ENCODE measurements at regions of chr5 and their contacts with region 1.

Region 1: DNA sequence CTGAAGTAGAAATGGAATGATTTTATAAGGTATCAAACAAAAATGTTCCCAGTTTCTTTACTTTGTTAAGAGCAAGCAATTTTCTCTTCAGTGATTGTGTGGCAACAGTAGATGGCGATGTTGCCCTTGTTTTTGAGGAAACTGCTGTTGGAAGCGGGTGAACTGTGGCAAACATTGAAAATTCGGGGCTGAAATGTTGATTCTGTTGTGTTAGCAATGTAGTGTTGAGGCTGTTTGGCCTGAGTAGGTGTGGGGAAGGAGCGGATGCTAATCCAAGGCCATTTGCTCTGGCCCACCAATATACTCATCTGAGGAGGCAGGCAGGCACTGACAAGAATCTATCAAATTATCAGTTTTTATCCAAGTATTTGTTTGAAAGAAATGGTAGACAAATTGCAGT is 129.8 kb downstream of the SLC12A2 start:
- DNase-seq: peak; percentile 24 to 75
- ATAC-seq: peak; percentile 61 to 83
- H3K4me3 ChIP-seq: no peak overlapping the region
- H3K27ac ChIP-seq: no peak overlapping the region
- H3K4me1 ChIP-seq: no peaks in the 10 kb centered on the region
- CTCF ChIP-seq: peak; percentile 96
- EP300 ChIP-seq: no peak
- POLR2A ChIP-seq: no peak
- RAD21 ChIP-seq: peak; percentile 93 to 96

Region 2: GRCh38 chr5:126998201-126998631 is 1215.1 kb before region 1 on chr5:
- CTCF ChIA-PET with region 1: no interaction called
- POLR2A ChIA-PET with region 1: no interaction called
- DNase-seq: no peak
- ATAC-seq: no peak
- H3K4me3 ChIP-seq: no peak overlapping the region
- H3K27ac ChIP-seq: no peak overlapping the region
- H3K4me1 ChIP-seq: no peaks in the 10 kb centered on the region
- CTCF ChIP-seq: no peak
- EP300 ChIP-seq: no peak
- POLR2A ChIP-seq: no peak
- RAD21 ChIP-seq: no peak

Region 3: DNA sequence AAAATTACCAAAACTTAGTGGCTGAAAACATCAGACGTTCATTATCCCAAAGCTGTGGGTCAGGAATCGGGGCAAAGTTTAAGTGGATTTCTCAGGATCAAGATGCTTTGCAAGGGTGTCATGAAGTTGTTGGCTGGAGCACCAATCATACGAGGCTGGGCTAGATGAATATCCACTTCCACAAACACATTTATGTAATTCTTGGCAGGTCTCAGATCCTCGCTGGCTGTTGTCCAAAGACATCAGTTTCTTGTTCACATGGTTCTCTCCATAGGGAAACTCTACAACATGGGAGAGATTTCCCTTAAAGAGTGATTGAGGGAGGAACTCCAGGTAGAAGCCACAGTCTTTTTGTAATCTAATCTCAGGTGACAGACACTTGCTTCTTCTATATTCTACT is 530.3 kb before region 1 on chr5:
- CTCF ChIA-PET with region 1: no interaction called
- POLR2A ChIA-PET with region 1: no interaction called
- DNase-seq: no peak
- ATAC-seq: no peak
- H3K4me3 ChIP-seq: no peak overlapping the region
- H3K27ac ChIP-seq: no peak overlapping the region
- H3K4me1 ChIP-seq: no peaks in the 10 kb centered on the region
- CTCF ChIP-seq: no peak
- EP300 ChIP-seq: no peak
- POLR2A ChIP-seq: no peak
- RAD21 ChIP-seq: no peak

Region 4: GRCh38 chr5:128237546-128237945 is 24.2 kb after region 1 on chr5:
- CTCF ChIA-PET with region 1: no interaction called
- POLR2A ChIA-PET with region 1: no interaction called
- DNase-seq: no peak
- ATAC-seq: no peak
- H3K4me3 ChIP-seq: no peak overlapping the region
- H3K27ac ChIP-seq: no peak overlapping the region
- H3K4me1 ChIP-seq: no peaks in the 10 kb centered on the region
- CTCF ChIP-seq: no peak
- EP300 ChIP-seq: no peak
- POLR2A ChIP-seq: no peak
- RAD21 ChIP-seq: no peak

Region 5: GRCh38 chr5:128498844-128499455 is 285.6 kb after region 1 on chr5:
- CTCF ChIA-PET with region 1: interaction called, 12 read pairs
- POLR2A ChIA-PET with region 1: no interaction called
- DNase-seq: peak; percentile 11 to 61
- ATAC-seq: peak in 1 of 2 experiments; percentile 61; a peak in 2 of 6 replicates
- H3K4me3 ChIP-seq: no peak overlapping the region
- H3K27ac ChIP-seq: no peak overlapping the region
- H3K4me1 ChIP-seq: no peaks in the 10 kb centered on the region
- CTCF ChIP-seq: peak; percentile 59
- EP300 ChIP-seq: no peak
- POLR2A ChIP-seq: no peak
- RAD21 ChIP-seq: peak; percentile 62 to 70

Region 6: DNA sequence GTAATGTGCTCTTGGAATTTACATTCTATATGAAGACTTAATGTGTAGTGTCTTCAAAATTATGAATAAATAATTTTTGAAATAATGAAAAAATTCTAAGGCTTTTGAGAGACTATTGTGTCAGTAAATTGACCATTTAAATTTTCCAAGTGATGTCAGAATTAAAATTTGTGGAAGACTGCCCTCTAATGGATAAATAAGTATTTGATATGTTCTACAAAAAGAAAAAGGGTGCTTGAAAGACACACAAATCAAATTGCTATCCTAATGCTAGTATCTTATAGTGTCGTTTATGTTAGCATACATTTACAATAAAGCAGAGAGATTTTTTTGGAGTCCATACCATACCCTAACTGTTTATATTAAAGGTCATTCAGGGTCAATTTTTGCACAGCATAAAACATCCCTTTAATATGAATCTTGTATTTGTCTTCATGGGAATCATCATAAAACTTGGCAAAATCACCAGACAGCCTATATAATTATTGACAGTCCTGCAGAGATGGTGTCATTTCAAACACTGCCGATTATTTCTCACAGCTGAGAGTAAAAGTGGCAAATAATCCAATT is 631.1 kb after region 1 on chr5:
- CTCF ChIA-PET with region 1: interaction called, 52 read pairs
- POLR2A ChIA-PET with region 1: no interaction called
- DNase-seq: peak; percentile 6 to 11
- ATAC-seq: no peak; a peak in 1 of 6 replicates
- H3K4me3 ChIP-seq: no peak overlapping the region
- H3K27ac ChIP-seq: no peak overlapping the region
- H3K4me1 ChIP-seq: no peaks in the 10 kb centered on the region
- CTCF ChIP-seq: peak; percentile 60
- EP300 ChIP-seq: no peak
- POLR2A ChIP-seq: no peak
- RAD21 ChIP-seq: peak; percentile 54 to 74